ENCODE measurements at regions of chr3 and their contacts with region 1.

Region 1: GRCh38 chr3:26648461-26648860 is 25.9 kb downstream of the LRRC3B start:
- DNase-seq: no peak
- H3K4me3 ChIP-seq: no peak overlapping the region
- H3K27ac ChIP-seq: no peak overlapping the region
- H3K4me1 ChIP-seq: no peaks in the 10 kb centered on the region
- H3K27me3 ChIP-seq: no peaks in the 10 kb centered on the region
- CTCF ChIP-seq: no peak
- EP300 ChIP-seq: no peak
- POLR2A ChIP-seq: no peak

Region 2: DNA sequence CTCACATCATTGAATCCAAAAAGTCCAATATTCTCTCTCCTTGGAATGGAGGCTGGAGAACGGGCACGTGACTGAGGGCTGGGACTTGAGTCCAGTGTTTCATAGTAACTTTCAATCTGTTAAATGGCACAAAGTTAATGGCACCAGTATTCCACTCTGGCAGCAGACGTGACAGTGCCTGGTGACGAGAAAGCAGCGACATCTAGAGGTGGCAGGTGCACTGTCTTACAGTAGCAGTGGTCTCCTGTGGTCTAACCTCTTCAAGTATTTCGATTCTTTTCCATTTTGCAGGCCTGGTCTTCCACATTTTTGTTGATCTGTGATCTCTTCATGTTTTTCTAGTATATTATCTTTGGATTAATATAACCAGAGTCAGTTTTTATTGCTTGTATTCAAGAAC is 751.4 kb before region 1 on chr3:
- in situ Hi-C with region 1: no loop called
- intact Hi-C with region 1: no loop called
- DNase-seq: peak; percentile 20
- H3K4me3 ChIP-seq: no peak overlapping the region
- H3K27ac ChIP-seq: no peak overlapping the region
- H3K4me1 ChIP-seq: no peaks in the 10 kb centered on the region
- H3K27me3 ChIP-seq: no peaks in the 10 kb centered on the region
- CTCF ChIP-seq: no peak
- EP300 ChIP-seq: no peak
- POLR2A ChIP-seq: no peak

Region 3: DNA sequence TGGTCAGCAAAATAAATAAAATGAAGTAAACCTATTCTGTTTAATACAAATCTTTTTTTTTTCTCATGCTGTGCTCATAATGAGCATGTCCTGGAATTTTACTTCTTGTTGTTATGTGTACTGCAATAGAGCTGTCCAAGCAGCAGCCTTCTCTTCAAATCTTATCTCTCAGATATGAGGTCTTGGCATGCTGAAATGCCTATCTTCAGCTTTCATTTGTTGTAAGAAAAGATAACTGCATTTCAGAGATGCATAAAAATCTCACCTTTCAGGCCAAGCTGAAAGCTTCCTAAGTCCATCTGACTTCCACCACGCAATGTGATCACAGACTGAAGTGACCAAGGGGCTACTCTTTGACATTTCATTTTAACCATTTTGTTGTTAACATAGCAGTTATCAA is 69.3 kb before region 1 on chr3:
- in situ Hi-C with region 1: no loop called
- intact Hi-C with region 1: no loop called
- DNase-seq: no peak
- H3K4me3 ChIP-seq: no peak overlapping the region
- H3K27ac ChIP-seq: no peak overlapping the region
- H3K4me1 ChIP-seq: no peaks in the 10 kb centered on the region
- H3K27me3 ChIP-seq: no peaks in the 10 kb centered on the region
- CTCF ChIP-seq: no peak
- EP300 ChIP-seq: no peak
- POLR2A ChIP-seq: no peak

Region 4: GRCh38 chr3:26623419-26624208 is 24.8 kb before region 1 on chr3:
- in situ Hi-C with region 1: no loop called
- intact Hi-C with region 1: loop called (anchors 1 kb)
- DNase-seq: no peak
- H3K4me3 ChIP-seq: peak overlapping the region in 2 of 4 donors; percentile 26 to 46
- H3K27ac ChIP-seq: no peak overlapping the region
- H3K4me1 ChIP-seq: peaks cover 0 to 7% (median 0%) of the 10 kb centered on the region in 4 donors
- H3K27me3 ChIP-seq: peaks cover 45% of the 10 kb centered on the region
- CTCF ChIP-seq: no peak
- EP300 ChIP-seq: no peak
- POLR2A ChIP-seq: no peak

Region 5: DNA sequence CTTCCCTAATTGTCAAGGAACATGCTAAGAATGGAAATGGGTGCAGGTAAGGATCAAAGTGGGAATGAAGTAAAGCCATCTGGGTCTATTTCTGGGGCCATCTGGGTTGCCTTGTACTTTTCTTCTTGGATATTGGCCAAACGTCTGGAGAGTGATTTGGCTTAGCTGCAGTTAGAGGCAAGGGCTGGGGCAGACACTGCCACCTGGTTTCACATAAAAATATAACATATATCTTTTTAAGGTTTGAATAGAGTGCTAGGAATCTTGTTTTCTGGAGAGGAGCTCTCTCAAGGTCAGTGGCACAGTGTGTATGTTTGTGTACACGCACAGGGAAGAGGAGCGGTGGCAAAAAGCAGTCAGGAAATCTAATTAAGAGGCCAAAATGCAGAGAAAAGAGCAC is 1098.4 kb after region 1 on chr3:
- in situ Hi-C with region 1: no loop called
- intact Hi-C with region 1: no loop called
- DNase-seq: no peak
- H3K4me3 ChIP-seq: no peak overlapping the region
- H3K27ac ChIP-seq: no peak overlapping the region
- H3K4me1 ChIP-seq: no peaks in the 10 kb centered on the region
- H3K27me3 ChIP-seq: no peaks in the 10 kb centered on the region
- CTCF ChIP-seq: no peak
- EP300 ChIP-seq: no peak
- POLR2A ChIP-seq: no peak

Measured in transverse colon (tissue), 4 donors.